Panc1 (cell line): ENCODE measurements at regions of chr1 and their contacts with region 1.

Region 1: GRCh38 chr1:9573723-9574122 is 15.0 kb upstream of the TMEM201 start:
- DNase-seq: no peak
- ATAC-seq: no peak
- H3K4me3 ChIP-seq: no peak overlapping the region
- H3K27ac ChIP-seq: no peak overlapping the region
- H3K4me1 ChIP-seq: no peaks in the 10 kb centered on the region
- H3K27me3 ChIP-seq: no peaks in the 10 kb centered on the region
- CTCF ChIP-seq: peak; percentile 64

Region 2: GRCh38 chr1:9269078-9269501 is 304.6 kb before region 1 on chr1:
- CTCF ChIA-PET with region 1: interaction called, 8 read pairs
- POLR2A ChIA-PET with region 1: no interaction called
- in situ Hi-C with region 1: no loop called
- intact Hi-C with region 1: loop called (anchors 5 kb)
- DNase-seq: no peak
- ATAC-seq: peak; percentile 20; the same call in 1 of the 2 replicates
- H3K4me3 ChIP-seq: no peak overlapping the region
- H3K27ac ChIP-seq: peak overlapping the region; percentile 59
- H3K4me1 ChIP-seq: peaks cover 43% of the 10 kb centered on the region
- H3K27me3 ChIP-seq: no peaks in the 10 kb centered on the region
- CTCF ChIP-seq: no peak

Region 3: GRCh38 chr1:9413148-9413876 is 160.4 kb before region 1 on chr1:
- CTCF ChIA-PET with region 1: interaction called, 12 read pairs
- POLR2A ChIA-PET with region 1: no interaction called
- in situ Hi-C with region 1: no loop called
- intact Hi-C with region 1: no loop called
- DNase-seq: no peak
- ATAC-seq: peak; percentile 84
- H3K4me3 ChIP-seq: no peak overlapping the region
- H3K27ac ChIP-seq: peak overlapping the region; percentile 96
- H3K4me1 ChIP-seq: peaks cover 36% of the 10 kb centered on the region
- H3K27me3 ChIP-seq: no peaks in the 10 kb centered on the region
- CTCF ChIP-seq: no peak